ENCODE measurements at regions of chr19 and their contacts with region 1.

Region 1: DNA sequence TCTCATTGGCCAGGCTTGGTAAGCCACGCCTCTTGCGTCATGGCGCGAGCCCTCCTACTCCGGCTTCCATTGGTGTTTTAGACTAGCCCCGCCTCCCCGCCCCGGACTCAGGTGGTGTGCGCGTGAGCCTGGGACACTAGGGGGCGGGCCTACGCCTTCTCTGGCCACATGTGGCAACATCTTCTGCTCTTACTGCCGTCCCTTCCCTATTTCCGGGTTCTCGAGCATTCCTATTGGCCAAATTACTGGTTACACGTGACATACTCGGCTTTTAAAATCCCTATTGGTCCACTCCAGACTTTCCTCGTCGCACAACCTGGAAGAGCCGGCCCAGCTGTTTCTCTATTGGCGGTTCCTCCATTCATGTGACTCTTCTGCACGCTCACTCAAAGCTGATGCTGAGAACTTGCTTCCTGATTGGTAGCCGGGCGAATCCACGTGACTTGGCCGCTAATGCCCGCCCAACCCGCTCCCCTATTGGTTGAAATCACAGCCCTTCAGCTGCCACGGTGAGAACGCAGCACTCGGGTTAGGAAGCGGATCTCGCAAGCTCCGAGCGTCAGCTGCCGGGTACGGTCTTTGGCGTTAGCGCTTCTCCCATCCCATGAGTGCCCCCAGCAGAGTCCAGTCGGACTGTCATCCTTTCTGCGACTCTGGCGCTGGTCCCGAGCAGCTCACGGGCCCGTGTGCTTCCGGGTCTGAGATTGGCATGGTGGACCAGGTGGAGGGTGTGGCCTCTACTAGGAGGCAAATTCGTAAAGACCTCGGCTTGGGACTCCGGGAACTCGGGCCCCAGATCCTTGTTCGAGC is at the start of gene BLOC1S3:
- DNase-seq: peak; percentile 100
- H3K4me3 Mint-ChIP-seq: peak within 1 kb of the TSS; percentile 81
- H3K27ac Mint-ChIP-seq: peak within 1 kb of the TSS; percentile 87
- H3K4me1 Mint-ChIP-seq: peaks cover 46% of the 10 kb centered on the region
- H3K27me3 Mint-ChIP-seq: no peaks in the 10 kb centered on the region
- total RNA-seq, gene BLOC1S3: 16.3 to 20.4 TPM

Region 2: DNA sequence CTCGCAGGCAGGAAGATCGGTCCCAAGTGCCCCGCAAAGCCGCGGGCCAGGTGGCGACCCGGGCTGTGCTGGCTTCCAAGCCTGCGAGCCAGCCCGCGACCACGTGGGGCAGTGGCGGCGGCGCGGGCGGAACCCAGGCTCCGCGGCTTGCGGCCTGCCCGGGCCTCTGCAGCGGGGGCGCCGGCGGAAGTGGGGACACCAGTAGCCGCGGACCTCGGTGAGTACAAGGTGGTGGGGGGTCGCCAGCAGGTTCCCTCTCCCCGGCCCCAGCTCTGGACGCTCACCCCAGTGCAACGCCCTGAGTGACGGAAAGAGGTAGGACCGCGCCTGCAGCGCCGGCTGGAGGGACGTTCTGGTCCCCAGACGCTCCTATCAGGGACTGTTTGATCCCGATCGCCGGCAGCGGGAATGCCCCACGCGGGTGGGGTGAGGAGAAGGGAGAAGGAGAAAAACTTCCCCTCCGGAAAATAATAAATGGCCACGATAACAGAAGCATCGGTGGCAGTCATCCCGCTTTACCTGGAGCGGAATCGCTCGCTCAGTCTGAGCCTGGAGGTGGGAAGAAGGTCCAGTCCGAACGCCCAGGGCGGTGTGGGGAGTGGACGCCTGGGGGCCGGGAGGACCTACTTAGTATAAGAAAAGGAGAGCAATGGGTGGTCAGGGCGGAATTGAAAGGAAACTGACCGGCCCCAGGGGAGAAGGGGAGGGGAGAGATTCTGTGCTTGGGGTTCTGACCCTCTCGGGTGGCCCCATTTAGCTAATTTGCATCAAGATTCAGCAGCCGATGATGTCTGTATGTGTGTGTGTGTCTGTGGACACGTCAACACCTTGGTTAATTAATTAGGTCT is 99.2 kb before region 1 on chr19 and contains the start of gene GEMIN7:
- CTCF ChIA-PET with region 1: interaction called, 3 read pairs
- POLR2A ChIA-PET with region 1: interaction called, 20 read pairs
- DNase-seq: peak; percentile 83
- H3K4me3 Mint-ChIP-seq: peak within 1 kb of the TSS; percentile 96
- H3K27ac Mint-ChIP-seq: peak within 1 kb of the TSS; percentile 83
- H3K4me1 Mint-ChIP-seq: peaks cover 56% of the 10 kb centered on the region
- H3K27me3 Mint-ChIP-seq: no peaks in the 10 kb centered on the region
- total RNA-seq, gene GEMIN7: 31.7 to 35.5 TPM

Region 3: GRCh38 chr19:45152504-45153338 is 25.7 kb before region 1 on chr19:
- CTCF ChIA-PET with region 1: interaction called, 9 read pairs
- POLR2A ChIA-PET with region 1: interaction called, 20 read pairs
- DNase-seq: peak; percentile 66
- H3K4me3 Mint-ChIP-seq: peak overlapping the region; percentile 49
- H3K27ac Mint-ChIP-seq: no peak overlapping the region
- H3K4me1 Mint-ChIP-seq: peaks cover 29% of the 10 kb centered on the region
- H3K27me3 Mint-ChIP-seq: peaks cover 30% of the 10 kb centered on the region

Region 4: GRCh38 chr19:45164577-45165335 is 13.7 kb before region 1 on chr19:
- CTCF ChIA-PET with region 1: interaction called, 6 read pairs
- POLR2A ChIA-PET with region 1: interaction called, 31 read pairs
- DNase-seq: peak; percentile 66
- H3K4me3 Mint-ChIP-seq: no peak overlapping the region
- H3K27ac Mint-ChIP-seq: no peak overlapping the region
- H3K4me1 Mint-ChIP-seq: peaks cover 34% of the 10 kb centered on the region
- H3K27me3 Mint-ChIP-seq: peaks cover 3% of the 10 kb centered on the region